Heart left ventricle (tissue), 16 donors: ENCODE measurements at regions of chr2 and their contacts with region 1.

Region 1: DNA sequence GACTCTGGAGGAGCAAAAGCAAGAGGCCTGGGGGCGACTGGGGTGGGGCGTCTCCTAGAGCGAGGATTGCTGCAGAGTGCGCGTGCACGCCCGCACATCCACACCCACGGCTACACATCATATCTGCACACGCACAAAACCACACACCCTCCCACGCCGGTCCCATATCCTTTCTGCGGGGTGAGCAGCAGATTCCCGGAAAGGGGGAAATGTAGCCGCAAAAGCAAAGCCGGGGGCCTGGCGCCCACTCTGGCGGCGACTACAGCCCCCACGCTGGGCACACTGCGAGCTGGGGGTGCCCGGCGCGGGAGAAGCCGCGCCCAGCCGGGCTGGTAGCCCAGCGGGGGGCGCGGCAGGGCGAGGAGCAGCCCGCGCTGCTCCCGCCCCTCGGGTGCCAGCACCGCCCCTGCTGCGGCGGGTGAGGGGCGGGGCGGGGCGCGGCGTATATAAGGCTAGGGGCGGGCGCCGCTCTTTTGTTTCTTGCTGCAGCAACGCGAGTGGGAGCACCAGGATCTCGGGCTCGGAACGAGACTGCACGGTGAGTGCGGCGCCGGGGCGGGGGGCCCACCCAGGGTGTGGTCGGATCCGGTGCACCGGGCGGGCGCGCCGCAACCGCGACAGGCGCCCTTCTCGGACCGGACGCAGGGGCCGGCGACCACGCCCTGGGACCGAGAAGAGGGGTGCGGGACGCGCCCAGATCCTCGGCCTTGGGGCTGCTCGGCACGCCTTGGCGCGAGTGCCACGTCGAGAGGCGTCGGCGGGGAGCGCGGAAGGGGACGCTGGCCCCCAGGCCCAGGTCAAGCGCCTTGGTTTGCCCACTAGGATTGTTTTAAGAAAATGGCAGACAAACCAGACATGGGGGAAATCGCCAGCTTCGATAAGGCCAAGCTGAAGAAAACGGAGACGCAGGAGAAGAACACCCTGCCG is at the start of gene TMSB10:
- DNase-seq: peak; percentile 91 to 96 (median 92)
- ATAC-seq: peak; percentile 55 to 89 (median 81)
- H3K4me3 ChIP-seq: peak within 1 kb of the TSS; percentile 72 to 100 (median 94)
- H3K27ac ChIP-seq: peak within 1 kb of the TSS; percentile 94 to 100 (median 98)
- H3K4me1 ChIP-seq: peaks cover 0 to 39% (median 6%) of the 10 kb centered on the region in 12 donors
- H3K27me3 ChIP-seq: no peaks in the 10 kb centered on the region
- CTCF ChIP-seq: peak in 7 of 12 donors; percentile 19 to 51 (median 29)
- POLR2A ChIP-seq: peak in 1 of 2 donors; percentile 91
- total RNA-seq, gene TMSB10: 288 to 3,094 (median 492) TPM

Region 2: DNA sequence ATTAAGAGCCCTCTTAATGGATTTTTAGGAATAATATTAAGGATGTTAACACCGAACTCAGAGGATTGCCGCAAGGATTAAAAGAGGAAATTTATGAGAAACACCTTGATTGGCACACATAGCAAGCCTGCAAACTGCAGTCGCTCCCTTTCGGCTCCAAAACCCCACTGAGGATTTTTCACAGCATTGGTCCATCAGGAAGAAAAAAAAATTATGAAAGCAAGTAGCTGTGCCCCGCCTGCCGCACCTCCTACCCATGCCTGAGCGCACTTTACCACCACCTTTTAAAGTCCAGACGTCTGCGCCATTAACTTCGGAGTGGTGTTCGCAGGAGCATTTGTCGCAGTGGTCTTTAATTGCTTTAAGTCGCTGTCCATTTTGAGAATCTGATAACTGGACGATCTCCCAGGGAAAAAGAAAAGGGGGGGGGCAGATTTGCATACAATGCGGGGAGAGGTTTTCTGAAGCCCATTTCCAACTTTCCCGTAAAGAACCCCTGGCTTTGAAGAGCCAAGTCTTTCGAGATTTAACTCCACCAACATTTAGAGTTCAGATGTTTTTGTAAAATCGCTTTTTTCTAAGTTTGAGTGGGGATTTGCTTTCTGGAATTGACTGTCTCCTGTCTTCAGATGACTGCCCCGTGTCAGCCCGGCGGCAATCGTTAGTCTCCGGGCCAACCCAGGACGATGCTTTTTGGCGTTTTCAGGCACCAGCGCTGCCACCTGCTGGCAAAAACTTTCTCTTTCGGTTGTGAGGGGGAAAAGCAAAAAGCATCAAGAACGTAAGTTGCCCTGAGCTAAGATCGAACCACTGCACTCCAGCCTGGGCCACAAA is 23.6 kb before region 1 on chr2:
- intact Hi-C with region 1: loop called in 1 of 10 experiments (anchors 2 kb)
- DNase-seq: peak; percentile 74 to 83 (median 79)
- ATAC-seq: peak; percentile 81 to 89 (median 84)
- H3K4me3 ChIP-seq: peak overlapping the region; percentile 27 to 70 (median 53)
- H3K27ac ChIP-seq: no peak overlapping the region
- H3K4me1 ChIP-seq: peaks cover 9 to 28% (median 19%) of the 10 kb centered on the region in 12 donors
- H3K27me3 ChIP-seq: peaks cover 0 to 25% (median 15%) of the 10 kb centered on the region in 9 donors
- CTCF ChIP-seq: peak; percentile 55 to 83 (median 71)
- POLR2A ChIP-seq: no peak

Region 3: DNA sequence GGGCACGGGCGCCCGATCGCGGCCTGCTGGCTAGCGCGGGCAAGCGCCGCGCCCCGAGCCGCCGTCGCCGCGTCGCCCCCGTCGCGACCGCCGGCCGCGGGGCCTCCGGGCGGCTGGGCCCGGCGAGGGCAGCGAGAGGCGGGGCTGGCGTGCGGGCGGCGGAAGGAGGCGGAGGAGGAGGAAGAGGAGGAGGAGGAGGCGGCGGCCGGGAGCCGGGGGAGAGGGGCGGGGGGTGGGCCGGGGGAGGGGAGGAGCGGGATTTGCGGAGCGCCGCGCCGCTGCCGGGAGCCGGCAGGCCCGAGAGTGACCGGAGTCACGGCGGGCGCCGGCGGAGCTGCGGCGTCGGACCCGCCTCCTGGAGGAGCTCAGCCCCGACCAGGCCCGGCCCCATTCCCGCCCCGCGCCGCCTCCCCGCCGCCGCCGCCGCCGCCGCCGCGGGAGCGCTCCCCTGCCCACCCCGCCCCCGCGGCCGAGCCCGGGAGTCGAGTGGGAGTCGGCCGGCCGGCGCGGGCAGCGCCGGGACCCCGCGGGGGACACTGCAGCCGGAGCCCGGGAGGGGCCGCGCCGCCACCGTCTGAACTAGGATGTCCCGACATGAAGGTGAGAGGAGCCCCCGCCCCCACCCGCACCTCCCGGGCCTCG is 65.5 kb after region 1 on chr2 and contains the start of gene KCMF1:
- intact Hi-C with region 1: loop called in 1 of 10 experiments (anchors 2 kb)
- DNase-seq: peak; percentile 83 to 93 (median 87)
- ATAC-seq: peak; percentile 59 to 80 (median 78)
- H3K4me3 ChIP-seq: peak within 1 kb of the TSS; percentile 74 to 98 (median 90)
- H3K27ac ChIP-seq: peak within 1 kb of the TSS; percentile 92 to 98 (median 96)
- H3K4me1 ChIP-seq: peaks cover 6 to 69% (median 39%) of the 10 kb centered on the region in 12 donors
- H3K27me3 ChIP-seq: no peaks in the 10 kb centered on the region
- CTCF ChIP-seq: no peak
- POLR2A ChIP-seq: no peak
- total RNA-seq, gene KCMF1: 58.9 to 104 (median 85.2) TPM

Region 4: GRCh38 chr2:85537600-85538485 is 632.4 kb after region 1 on chr2:
- intact Hi-C with region 1: no loop called
- DNase-seq: peak; percentile 60 to 68 (median 64)
- ATAC-seq: peak; percentile 3 to 51 (median 23)
- H3K4me3 ChIP-seq: peak overlapping the region; percentile 59 to 98 (median 90)
- H3K27ac ChIP-seq: peak overlapping the region; percentile 94 to 100 (median 99)
- H3K4me1 ChIP-seq: peaks cover 0 to 46% (median 34%) of the 10 kb centered on the region in 12 donors
- H3K27me3 ChIP-seq: no peaks in the 10 kb centered on the region
- CTCF ChIP-seq: peak in 2 of 12 donors; percentile 5 to 25
- POLR2A ChIP-seq: no peak